ENCODE measurements at regions of chr17 and their contacts with region 1.

Region 1: DNA sequence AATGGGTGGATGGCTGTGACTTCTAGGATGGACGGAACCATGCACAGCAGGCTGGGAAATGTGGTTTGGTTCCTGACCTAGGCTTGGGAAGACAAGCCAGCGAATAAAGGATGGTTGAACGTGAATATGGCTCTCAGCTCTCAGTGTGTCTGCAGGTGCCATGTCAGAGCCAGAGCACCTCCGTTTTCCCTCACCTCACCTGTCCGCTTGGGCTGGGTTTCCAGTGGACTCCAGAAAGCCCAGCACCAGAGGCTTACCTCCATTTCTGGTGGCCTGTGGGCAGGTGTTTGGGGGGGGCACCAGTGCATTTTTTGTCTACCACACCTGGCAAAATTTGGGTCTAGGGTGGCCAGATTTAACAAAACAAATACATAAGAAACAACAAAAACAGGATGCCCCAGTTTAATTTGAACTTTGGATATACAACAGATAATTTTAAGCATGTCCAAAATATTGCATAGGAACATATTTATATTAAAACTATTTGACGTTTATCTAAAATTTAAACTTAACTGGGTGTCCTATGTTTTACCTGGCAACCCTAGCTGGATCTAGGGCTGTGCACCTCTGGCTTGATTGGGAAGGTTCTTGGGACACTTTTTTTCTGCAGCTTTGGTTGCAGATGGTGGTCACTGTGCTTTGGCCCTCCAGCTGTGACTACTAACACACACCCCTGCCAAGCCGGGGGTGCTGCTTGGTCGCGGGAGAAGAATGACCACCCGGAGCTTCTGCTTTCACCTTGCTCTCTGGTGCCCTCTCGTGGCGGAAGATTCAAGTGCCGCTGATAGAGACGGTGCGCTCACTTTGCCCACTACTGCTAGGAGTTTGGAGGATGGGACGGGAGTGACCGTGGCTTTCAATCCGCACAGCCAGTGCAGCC is 6.3 kb downstream of the SPACA3 start:
- DNase-seq: peak; percentile 80
- H3K4me3 Mint-ChIP-seq: no peak overlapping the region
- H3K27ac Mint-ChIP-seq: no peak overlapping the region
- H3K4me1 Mint-ChIP-seq: peaks cover 4% of the 10 kb centered on the region
- H3K27me3 Mint-ChIP-seq: peaks cover 12% of the 10 kb centered on the region

Region 2: GRCh38 chr17:32936894-32937500 is 61.0 kb before region 1 on chr17:
- CTCF ChIA-PET with region 1: interaction called, 36 read pairs
- POLR2A ChIA-PET with region 1: no interaction called
- intact Hi-C with region 1: loop called (anchors 1 kb)
- DNase-seq: peak; percentile 74
- H3K4me3 Mint-ChIP-seq: no peak overlapping the region
- H3K27ac Mint-ChIP-seq: no peak overlapping the region
- H3K4me1 Mint-ChIP-seq: peaks cover 6% of the 10 kb centered on the region
- H3K27me3 Mint-ChIP-seq: peaks cover 27% of the 10 kb centered on the region

Region 3: GRCh38 chr17:33009636-33010035 is 11.6 kb after region 1 on chr17:
- CTCF ChIA-PET with region 1: interaction called, 13 read pairs
- POLR2A ChIA-PET with region 1: no interaction called
- intact Hi-C with region 1: no loop called
- DNase-seq: no peak
- H3K4me3 Mint-ChIP-seq: no peak overlapping the region
- H3K27ac Mint-ChIP-seq: no peak overlapping the region
- H3K4me1 Mint-ChIP-seq: no peaks in the 10 kb centered on the region
- H3K27me3 Mint-ChIP-seq: peaks cover 4% of the 10 kb centered on the region